Activated CD4-positive, alpha-beta T cell treated with anti-CD3 and anti-CD28 coated beads, Interleukin-2, amount 10 ng/mL, durations not matched to agents 24 days and 14 days (primary cell): ENCODE measurements at regions of chr14 and their contacts with region 1.

Region 1: GRCh38 chr14:99518441-99519346 is 37.5 kb downstream of the CCNK start:
- DNase-seq: peak; percentile 95
- H3K4me3 Mint-ChIP-seq: no peak overlapping the region
- H3K27ac Mint-ChIP-seq: no peak overlapping the region
- H3K4me1 Mint-ChIP-seq: no peaks in the 10 kb centered on the region
- H3K27me3 Mint-ChIP-seq: no peaks in the 10 kb centered on the region

Region 2: DNA sequence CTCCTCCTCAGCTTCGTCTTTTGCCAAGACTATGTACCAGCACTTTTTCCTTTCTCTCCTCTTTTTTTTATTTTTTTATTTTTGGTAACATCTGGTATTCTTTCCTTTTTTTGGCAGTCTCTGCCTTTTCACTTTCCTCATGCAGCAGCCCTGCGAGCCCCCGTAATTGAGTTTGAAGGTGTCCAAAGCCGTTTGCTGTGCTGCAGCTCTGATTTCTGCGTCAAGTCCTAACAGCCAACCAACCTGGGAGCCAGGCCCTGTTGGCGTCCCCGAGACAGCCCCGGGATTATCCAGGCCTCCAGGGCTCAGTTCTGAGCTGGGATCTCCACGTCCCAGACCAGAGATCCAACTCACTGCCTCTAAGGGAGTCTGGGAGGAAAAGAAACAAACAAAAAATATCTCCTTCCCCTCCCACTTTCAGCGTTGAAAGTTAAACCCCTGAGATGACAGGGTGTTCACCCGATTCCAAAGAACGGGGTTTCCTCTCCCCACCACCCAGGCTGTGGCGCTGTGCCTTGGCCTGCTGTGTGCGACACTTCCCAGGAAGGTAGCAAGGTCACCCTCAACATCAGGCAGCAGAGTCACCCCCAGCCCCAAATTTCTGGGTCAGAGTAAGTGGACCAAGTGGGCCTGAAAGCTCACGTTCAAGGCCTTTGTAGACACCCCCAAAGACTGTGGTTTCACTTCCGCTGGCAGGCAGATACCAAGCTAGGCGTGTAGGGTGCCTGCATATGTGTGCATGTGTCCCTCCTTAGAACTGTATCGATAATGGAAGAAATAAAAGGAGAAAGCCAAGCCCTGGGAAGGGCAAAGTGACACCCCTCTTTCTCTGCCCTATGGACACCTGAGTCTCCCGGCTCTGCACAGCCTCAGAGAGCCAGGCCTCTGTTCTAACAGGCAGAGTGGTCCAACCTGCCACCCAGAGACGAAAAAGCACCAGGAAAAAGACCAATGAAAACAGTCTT is 257.8 kb before region 1 on chr14:
- intact Hi-C with region 1: no loop called
- DNase-seq: peak; percentile 91
- H3K4me3 Mint-ChIP-seq: peak overlapping the region; percentile 91
- H3K27ac Mint-ChIP-seq: peak overlapping the region; percentile 99
- H3K4me1 Mint-ChIP-seq: peaks cover 92% of the 10 kb centered on the region
- H3K27me3 Mint-ChIP-seq: no peaks in the 10 kb centered on the region

Region 3: DNA sequence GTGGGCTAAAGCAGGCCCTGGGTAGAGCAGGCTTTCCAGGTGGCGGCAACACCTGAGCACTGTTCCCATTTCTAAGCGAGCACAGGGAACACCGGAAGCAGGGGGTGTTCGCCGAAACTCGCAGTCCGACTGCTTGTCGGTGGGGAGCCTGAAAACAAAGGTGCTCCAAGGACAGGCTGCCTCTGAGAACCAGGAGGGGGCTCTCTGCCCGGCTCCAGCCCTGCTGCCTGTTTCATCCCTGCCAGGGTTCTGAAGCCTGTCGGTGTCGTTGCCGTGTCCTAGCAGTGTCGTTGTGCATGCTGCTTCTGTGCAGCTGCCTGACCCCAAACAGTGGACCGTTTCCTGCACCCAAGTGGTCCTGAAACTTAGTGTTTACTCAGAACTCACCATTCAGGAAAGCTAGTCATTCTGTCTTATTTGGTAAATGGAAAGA is 15.7 kb before region 1 on chr14:
- intact Hi-C with region 1: no loop called
- DNase-seq: no peak
- H3K4me3 Mint-ChIP-seq: no peak overlapping the region
- H3K27ac Mint-ChIP-seq: no peak overlapping the region
- H3K4me1 Mint-ChIP-seq: no peaks in the 10 kb centered on the region
- H3K27me3 Mint-ChIP-seq: no peaks in the 10 kb centered on the region

Region 4: DNA sequence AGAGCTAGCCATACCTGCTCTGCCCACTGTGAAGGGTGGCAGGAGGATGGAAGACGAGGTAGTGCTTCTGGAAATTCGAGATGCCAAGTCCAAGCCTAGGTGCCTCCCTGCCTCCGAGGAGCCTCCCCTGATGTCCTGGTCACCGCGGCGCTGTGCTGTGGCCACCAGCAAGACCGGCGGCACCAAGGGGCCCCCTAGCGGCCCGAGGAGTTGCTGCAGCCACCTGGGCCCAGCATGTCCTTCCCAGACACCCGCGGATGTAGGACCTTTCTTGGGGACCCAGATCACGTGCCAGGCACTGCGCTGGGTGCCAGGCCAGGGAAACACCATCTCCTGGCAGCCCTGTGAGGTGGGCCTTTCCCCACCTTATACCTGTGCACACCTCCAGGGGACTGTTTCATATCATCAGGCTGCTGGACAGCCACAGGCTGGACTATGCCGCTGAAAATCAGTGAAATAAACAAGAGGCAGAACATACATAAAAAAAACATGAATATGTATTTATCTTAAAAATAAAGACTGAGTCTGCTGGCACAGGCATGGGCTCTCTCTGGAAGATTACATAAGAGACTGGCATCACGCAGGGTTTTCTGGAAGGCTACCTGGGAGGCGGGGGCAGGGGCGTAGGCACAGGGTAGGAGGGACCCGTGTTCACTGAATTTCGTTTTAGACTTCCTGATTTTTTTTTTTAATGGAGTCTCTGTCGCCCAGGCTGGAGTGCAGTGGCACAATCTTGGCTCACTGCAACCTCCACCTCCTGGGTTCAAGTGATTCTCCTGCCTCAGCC is 110.3 kb after region 1 on chr14:
- intact Hi-C with region 1: loop called (anchors 1 kb)
- DNase-seq: peak; percentile 90
- H3K4me3 Mint-ChIP-seq: no peak overlapping the region
- H3K27ac Mint-ChIP-seq: no peak overlapping the region
- H3K4me1 Mint-ChIP-seq: peaks cover 4% of the 10 kb centered on the region
- H3K27me3 Mint-ChIP-seq: peaks cover 3% of the 10 kb centered on the region

Region 5: GRCh38 chr14:99644723-99645550 is 126.2 kb after region 1 on chr14 and contains the start of gene HHIPL1:
- intact Hi-C with region 1: no loop called
- DNase-seq: no peak
- H3K4me3 Mint-ChIP-seq: no peak within 1 kb of the TSS
- H3K27ac Mint-ChIP-seq: no peak within 1 kb of the TSS
- H3K4me1 Mint-ChIP-seq: no peaks in the 10 kb centered on the region
- H3K27me3 Mint-ChIP-seq: peaks cover 27% of the 10 kb centered on the region
- total RNA-seq, gene HHIPL1: not detected in 2 replicates

Region 6: DNA sequence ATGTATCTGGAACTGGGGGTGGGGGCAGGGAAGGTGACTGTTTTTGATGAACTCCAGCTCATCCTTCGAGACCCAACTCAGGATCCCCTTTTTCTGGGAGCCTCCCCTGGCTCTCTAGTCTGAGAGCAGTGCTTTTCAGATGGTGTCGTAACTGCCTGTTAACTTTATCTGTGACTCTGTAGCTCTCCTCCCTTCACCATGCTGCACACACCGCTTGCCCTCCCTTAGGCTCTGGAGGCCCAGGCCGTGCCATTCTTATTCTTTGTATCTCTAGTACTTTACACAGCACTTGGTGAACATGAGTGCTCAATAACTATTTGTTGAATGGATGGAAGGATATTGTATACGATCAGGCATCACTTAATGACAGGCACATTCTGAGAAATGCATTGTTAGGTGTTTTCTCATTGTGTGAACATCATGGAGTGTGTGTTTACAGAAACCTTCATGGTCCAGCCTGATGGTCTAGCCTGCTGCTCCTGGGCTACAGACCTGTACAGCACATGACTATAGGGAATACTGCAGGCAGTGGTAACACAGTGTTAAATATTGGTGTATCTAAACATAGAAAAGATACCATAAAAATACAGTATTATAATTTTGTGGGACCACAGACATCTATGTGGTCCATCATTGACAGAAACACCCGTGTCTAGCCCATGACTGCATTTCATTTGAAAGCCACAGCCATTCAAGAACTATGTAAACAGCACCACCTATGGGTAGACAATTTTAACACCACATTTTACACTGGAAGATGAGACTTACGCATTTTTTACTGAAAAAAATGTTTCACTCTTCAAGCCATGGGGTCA is 366.3 kb after region 1 on chr14:
- intact Hi-C with region 1: loop called (anchors 1 kb)
- DNase-seq: peak; percentile 79
- H3K4me3 Mint-ChIP-seq: no peak overlapping the region
- H3K27ac Mint-ChIP-seq: no peak overlapping the region
- H3K4me1 Mint-ChIP-seq: no peaks in the 10 kb centered on the region
- H3K27me3 Mint-ChIP-seq: peaks cover 5% of the 10 kb centered on the region